GM12878 (cell line): ENCODE measurements at regions of chr2 and their contacts with region 1.

Region 1: DNA sequence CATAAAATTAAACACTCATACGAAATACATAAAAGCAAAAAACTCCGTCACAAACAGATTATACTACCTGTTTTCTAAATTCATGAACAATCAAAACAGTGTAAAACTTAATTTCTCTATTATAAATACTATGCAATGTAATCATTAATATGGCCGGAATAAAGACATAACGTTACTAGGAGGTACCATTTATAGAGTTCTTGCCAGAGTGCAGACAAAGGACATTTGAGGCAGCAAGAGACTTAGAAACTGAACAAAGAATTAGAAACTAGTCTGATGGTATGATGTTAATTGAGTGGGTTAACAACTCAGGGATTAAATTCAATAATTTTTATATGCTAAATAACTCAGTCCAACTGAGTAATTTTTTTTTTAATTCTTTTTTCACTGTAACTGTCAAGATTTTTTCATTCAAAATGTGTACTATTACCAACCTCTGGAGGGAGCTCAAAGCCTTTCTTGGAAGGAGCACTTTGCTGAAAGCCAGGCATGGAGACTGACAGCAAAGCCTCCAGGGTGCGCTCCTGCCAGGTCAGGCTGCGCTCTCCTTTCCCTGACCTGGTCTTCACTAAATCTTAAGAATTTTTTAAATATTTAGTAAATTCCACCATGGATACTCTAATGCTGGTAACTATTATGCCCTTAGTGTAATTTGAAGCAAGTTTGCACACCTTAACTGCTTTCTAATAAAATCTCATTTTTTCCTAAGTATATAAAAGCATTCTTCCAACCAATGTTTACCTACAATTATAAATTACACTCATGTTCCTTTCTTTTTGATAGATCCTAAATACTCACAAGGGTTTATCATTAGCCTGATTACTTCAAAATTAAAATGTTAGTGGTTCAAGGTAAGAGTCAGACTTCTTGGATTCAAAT is 34.1 kb downstream of the WDR35 start:
- DNase-seq: peak; percentile 24
- ATAC-seq: peak; percentile 100
- H3K4me3 ChIP-seq: no peak overlapping the region
- H3K27ac ChIP-seq: no peak overlapping the region
- H3K4me1 ChIP-seq: no peaks in the 10 kb centered on the region
- H3K27me3 ChIP-seq: no peaks in the 10 kb centered on the region
- CTCF ChIP-seq: peak; percentile 79 to 98 (median 82)
- EP300 ChIP-seq: no peak
- POLR2A ChIP-seq: no peak
- RAD21 ChIP-seq: peak; percentile 91

Region 2: GRCh38 chr2:19971691-19972090 is 15.9 kb after region 1 on chr2:
- CTCF ChIA-PET with region 1: interaction called, 11 read pairs
- POLR2A ChIA-PET with region 1: no interaction called
- RAD21 ChIA-PET with region 1: no interaction called
- SMC1A ChIA-PET with region 1: no interaction called
- in situ Hi-C with region 1: no loop called
- intact Hi-C with region 1: no loop called
- DNase-seq: no peak
- ATAC-seq: no peak
- H3K4me3 ChIP-seq: no peak overlapping the region
- H3K27ac ChIP-seq: no peak overlapping the region
- H3K4me1 ChIP-seq: no peaks in the 10 kb centered on the region
- H3K27me3 ChIP-seq: no peaks in the 10 kb centered on the region
- CTCF ChIP-seq: no peak
- EP300 ChIP-seq: no peak
- POLR2A ChIP-seq: no peak
- RAD21 ChIP-seq: no peak

Region 3: GRCh38 chr2:20097879-20098714 is 142.3 kb after region 1 on chr2:
- CTCF ChIA-PET with region 1: interaction called, 17 read pairs
- POLR2A ChIA-PET with region 1: no interaction called
- RAD21 ChIA-PET with region 1: interaction called, 4 read pairs
- SMC1A ChIA-PET with region 1: interaction called, 8 read pairs
- in situ Hi-C with region 1: loop called (anchors 5 kb)
- intact Hi-C with region 1: loop called (anchors 1 kb)
- DNase-seq: peak; percentile 49
- ATAC-seq: peak; percentile 96
- H3K4me3 ChIP-seq: no peak overlapping the region
- H3K27ac ChIP-seq: no peak overlapping the region
- H3K4me1 ChIP-seq: no peaks in the 10 kb centered on the region; the same call in 1 of the 2 replicates
- H3K27me3 ChIP-seq: no peaks in the 10 kb centered on the region
- CTCF ChIP-seq: peak; percentile 92 to 99 (median 97); a peak in 5 of 6 replicates
- EP300 ChIP-seq: no peak
- POLR2A ChIP-seq: no peak
- RAD21 ChIP-seq: peak; percentile 99

Region 4: GRCh38 chr2:20242060-20243006 is 286.6 kb after region 1 on chr2:
- CTCF ChIA-PET with region 1: no interaction called
- POLR2A ChIA-PET with region 1: no interaction called
- RAD21 ChIA-PET with region 1: no interaction called
- SMC1A ChIA-PET with region 1: no interaction called
- in situ Hi-C with region 1: no loop called
- intact Hi-C with region 1: loop called (anchors 5 kb)
- DNase-seq: no peak
- ATAC-seq: peak; percentile 85
- H3K4me3 ChIP-seq: 0 out of 2 replicates have a peak overlapping the region, but pooled peaks have one; percentile 41
- H3K27ac ChIP-seq: no peak overlapping the region
- H3K4me1 ChIP-seq: no peaks in the 10 kb centered on the region
- H3K27me3 ChIP-seq: no peaks in the 10 kb centered on the region
- CTCF ChIP-seq: peak; percentile 39 to 53 (median 50)
- EP300 ChIP-seq: no peak
- POLR2A ChIP-seq: no peak; the same call in 1 of the 2 replicates
- RAD21 ChIP-seq: peak; percentile 33; the same call in 1 of the 2 replicates